Activated CD4-positive, alpha-beta T cell treated with anti-CD3 and anti-CD28 coated beads for 36 hours (primary cell): ENCODE measurements at regions of chrX and their contacts with region 1.

Region 1: GRCh38 chrX:107776649-107777535 is 641 bp upstream of the NCBP2L start:
- DNase-seq: peak; percentile 88
- ATAC-seq: peak; percentile 80
- H3K4me3 Mint-ChIP-seq: peak overlapping the region; percentile 77
- H3K27ac Mint-ChIP-seq: peak overlapping the region; percentile 86
- H3K4me1 Mint-ChIP-seq: peaks cover 12% of the 10 kb centered on the region
- H3K27me3 Mint-ChIP-seq: no peaks in the 10 kb centered on the region

Region 2: GRCh38 chrX:106999002-106999975 is 777.6 kb before region 1 on chrX:
- CTCF ChIA-PET with region 1: no interaction called
- POLR2A ChIA-PET with region 1: no interaction called
- intact Hi-C with region 1: loop called in 1 of 2 experiments (anchors 1 kb)
- DNase-seq: peak; percentile 66
- ATAC-seq: peak; percentile 65
- H3K4me3 Mint-ChIP-seq: peak overlapping the region; percentile 80
- H3K27ac Mint-ChIP-seq: peak overlapping the region; percentile 78
- H3K4me1 Mint-ChIP-seq: peaks cover 3% of the 10 kb centered on the region
- H3K27me3 Mint-ChIP-seq: no peaks in the 10 kb centered on the region

Region 3: DNA sequence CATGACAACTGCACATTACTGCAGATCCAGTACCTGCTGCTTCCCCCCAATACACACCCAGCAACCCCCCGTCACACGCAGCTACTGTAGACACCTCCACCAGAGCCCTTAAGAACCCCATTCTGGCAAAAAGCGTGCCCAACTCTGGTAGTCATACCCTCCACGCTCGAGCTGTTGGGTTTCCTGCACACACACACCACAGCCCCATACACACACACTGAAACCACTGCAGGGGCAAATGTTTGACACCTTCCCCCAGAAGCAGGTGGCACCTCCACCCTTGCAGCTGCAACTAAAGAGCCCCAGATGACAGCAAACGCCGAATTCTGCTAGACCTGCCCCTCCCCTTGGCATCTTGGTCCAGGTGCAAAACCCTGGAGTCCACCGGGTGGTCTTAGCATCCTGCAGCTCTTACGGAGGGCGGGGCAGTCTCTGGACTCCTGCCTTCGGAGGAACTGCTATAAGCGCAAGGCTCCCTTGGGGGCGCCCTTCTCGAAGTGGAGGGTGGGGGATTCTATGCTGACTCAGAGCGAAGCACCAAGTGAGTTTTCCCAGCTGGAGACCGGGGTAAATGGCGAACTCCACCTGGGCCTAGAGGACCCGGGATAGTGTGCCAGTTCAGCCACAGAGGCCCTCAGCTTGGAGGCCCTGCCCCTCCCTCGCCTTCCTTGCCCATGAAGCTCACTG is 325.9 kb before region 1 on chrX:
- CTCF ChIA-PET with region 1: interaction called, 3 read pairs
- POLR2A ChIA-PET with region 1: no interaction called
- intact Hi-C with region 1: loop called in 1 of 2 experiments (anchors 10 kb)
- DNase-seq: peak; percentile 45
- ATAC-seq: no peak
- H3K4me3 Mint-ChIP-seq: peak overlapping the region; percentile 43
- H3K27ac Mint-ChIP-seq: no peak overlapping the region
- H3K4me1 Mint-ChIP-seq: peaks cover 16% of the 10 kb centered on the region
- H3K27me3 Mint-ChIP-seq: peaks cover 43% of the 10 kb centered on the region

Region 4: GRCh38 chrX:107602694-107603239 is 174.1 kb before region 1 on chrX:
- CTCF ChIA-PET with region 1: no interaction called
- POLR2A ChIA-PET with region 1: no interaction called
- intact Hi-C with region 1: no loop called
- DNase-seq: no peak
- ATAC-seq: no peak
- H3K4me3 Mint-ChIP-seq: no peak overlapping the region
- H3K27ac Mint-ChIP-seq: no peak overlapping the region
- H3K4me1 Mint-ChIP-seq: no peaks in the 10 kb centered on the region
- H3K27me3 Mint-ChIP-seq: no peaks in the 10 kb centered on the region

Region 5: DNA sequence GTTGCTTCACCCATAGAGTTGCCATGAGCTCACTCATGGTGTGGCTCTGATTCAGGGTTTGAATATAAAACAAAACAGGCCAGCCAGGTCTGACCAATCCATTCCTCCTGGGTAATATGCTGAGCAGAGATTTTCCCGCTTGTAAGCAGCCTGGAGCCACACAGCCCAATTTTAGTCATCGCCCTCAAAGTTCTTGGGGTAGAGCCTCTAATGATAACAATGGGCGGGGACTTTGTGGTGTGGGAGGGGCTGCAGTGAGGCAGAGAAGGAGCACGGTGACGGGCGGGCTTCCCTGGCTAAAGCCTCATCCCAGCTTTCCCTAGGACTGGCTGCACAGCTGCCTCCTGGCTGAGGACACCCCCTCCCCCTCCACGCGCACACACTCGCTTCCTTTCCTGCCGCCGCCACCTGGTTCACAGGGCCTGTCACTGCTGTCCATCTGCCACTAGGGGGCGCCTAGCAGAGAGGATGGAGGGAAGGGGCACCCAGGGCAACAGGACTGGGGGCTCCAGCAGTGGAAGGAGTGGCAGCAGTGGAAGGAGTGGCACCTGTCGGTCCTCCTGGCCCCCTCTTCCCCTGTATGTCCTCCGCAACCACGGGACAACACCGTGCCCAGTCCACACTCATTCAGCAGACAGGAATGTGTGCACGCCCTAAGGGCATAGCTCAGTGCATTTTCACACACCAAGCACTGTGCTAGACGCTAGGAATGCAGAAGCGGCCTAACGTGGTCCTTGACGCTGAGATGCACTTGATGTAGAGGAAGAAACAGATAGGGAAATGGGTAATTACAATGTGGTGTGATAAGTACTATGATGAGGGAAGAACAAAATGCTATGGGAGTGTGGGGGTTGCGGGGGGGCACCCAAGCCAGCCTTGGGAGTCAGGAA is 121.8 kb before region 1 on chrX:
- CTCF ChIA-PET with region 1: interaction called, 149 read pairs
- POLR2A ChIA-PET with region 1: interaction called, 4 read pairs
- intact Hi-C with region 1: loop called (anchors 1 kb)
- DNase-seq: peak; percentile 81
- ATAC-seq: peak; percentile 83
- H3K4me3 Mint-ChIP-seq: no peak overlapping the region
- H3K27ac Mint-ChIP-seq: peak overlapping the region; percentile 2
- H3K4me1 Mint-ChIP-seq: peaks cover 12% of the 10 kb centered on the region
- H3K27me3 Mint-ChIP-seq: no peaks in the 10 kb centered on the region

Region 6: GRCh38 chrX:107716816-107717700 is 59.8 kb before region 1 on chrX:
- CTCF ChIA-PET with region 1: interaction called, 20 read pairs
- POLR2A ChIA-PET with region 1: interaction called, 5 read pairs
- intact Hi-C with region 1: loop called (anchors 1 to 2 kb)
- DNase-seq: peak; percentile 88
- ATAC-seq: peak; percentile 88
- H3K4me3 Mint-ChIP-seq: peak overlapping the region; percentile 90
- H3K27ac Mint-ChIP-seq: peak overlapping the region; percentile 92
- H3K4me1 Mint-ChIP-seq: peaks cover 43% of the 10 kb centered on the region
- H3K27me3 Mint-ChIP-seq: no peaks in the 10 kb centered on the region

Region 7: DNA sequence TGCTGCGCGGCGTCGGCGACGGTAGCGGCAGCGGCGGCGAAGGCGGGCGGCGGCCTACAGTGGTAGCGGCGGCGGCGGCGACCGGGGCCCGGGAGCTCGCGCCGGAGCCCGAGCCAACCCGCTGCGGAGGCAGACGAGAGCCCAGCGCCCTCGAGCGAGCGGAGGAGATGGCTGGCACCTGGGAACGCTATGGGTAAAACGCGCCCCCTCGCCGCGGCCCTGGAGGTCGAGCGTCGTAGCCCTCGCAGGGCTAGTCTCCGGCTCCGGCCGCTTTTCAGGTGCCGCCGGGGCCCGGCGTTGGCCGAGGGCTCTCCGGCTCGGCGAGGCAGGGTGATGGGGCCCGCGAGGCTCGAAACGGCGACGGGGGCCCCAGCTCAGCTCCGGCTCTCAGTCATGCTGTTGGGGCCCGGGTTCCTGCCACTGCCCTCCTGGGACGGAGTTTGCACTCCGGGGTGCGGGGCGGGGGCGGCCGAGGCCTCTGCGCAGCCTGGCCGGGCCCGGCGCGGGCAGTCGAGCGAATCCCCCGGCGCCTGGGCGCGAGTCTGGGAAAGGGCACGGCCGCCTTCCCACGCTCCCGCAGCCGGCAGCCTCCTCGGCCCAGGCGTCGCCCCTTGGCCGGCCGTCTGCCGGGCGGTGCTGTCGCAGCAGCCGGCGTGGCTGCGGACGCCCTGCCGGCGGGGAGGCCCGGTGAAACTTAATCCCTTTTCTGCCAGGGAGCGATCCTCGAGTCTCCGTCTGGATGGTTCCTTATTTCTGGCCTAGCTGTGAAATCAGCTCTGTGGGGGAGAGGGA is 49.5 kb after region 1 on chrX:
- CTCF ChIA-PET with region 1: interaction called, 7 read pairs
- POLR2A ChIA-PET with region 1: no interaction called
- intact Hi-C with region 1: loop called in 1 of 2 experiments (anchors 2 kb)
- DNase-seq: peak; percentile 56
- ATAC-seq: peak; percentile 43
- H3K4me3 Mint-ChIP-seq: peak overlapping the region; percentile 75
- H3K27ac Mint-ChIP-seq: peak overlapping the region; percentile 78
- H3K4me1 Mint-ChIP-seq: peaks cover 46% of the 10 kb centered on the region
- H3K27me3 Mint-ChIP-seq: peaks cover 4% of the 10 kb centered on the region

Region 8: GRCh38 chrX:108070891-108071290 is 294.0 kb after region 1 on chrX:
- CTCF ChIA-PET with region 1: interaction called, 3 read pairs
- POLR2A ChIA-PET with region 1: no interaction called
- intact Hi-C with region 1: loop called in 1 of 2 experiments (anchors 5 kb)
- DNase-seq: no peak
- ATAC-seq: no peak
- H3K4me3 Mint-ChIP-seq: no peak overlapping the region
- H3K27ac Mint-ChIP-seq: no peak overlapping the region
- H3K4me1 Mint-ChIP-seq: peaks cover 4% of the 10 kb centered on the region
- H3K27me3 Mint-ChIP-seq: no peaks in the 10 kb centered on the region

Region 9: DNA sequence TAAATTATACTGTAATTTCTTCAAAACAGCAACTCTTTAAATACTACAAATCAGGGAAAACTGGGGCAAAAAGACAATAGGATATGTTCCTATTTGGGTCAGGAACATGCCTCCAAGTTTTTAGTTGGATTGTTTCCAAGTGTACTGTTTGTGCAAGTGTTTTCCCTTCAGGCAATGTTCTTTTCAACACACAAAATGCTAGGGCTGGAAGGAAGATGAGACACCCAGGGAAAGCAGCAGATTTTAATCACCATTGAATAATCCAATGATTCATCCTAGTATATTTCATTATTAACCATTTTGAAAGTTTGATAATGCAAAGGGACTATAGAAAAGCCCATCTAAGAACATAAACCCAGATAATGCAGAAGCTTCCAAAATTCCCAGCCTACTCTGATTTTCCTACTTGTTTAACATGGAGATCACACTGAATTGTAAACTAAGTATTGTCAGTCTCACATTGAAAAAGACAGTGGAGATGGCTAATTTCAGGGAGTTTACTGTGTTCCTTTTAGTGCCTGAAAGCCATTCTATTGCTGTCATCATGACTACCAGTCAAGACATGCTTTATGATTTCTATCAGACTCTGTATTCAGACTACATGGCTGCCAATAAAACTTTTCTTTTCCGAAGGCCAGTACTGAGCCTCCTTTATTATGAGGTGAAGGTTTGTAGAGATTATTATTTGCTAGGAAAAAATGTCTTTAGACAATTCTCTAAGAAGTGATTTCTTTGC is 622.7 kb after region 1 on chrX:
- CTCF ChIA-PET with region 1: no interaction called
- POLR2A ChIA-PET with region 1: no interaction called
- intact Hi-C with region 1: no loop called
- DNase-seq: no peak
- ATAC-seq: no peak
- H3K4me3 Mint-ChIP-seq: no peak overlapping the region
- H3K27ac Mint-ChIP-seq: no peak overlapping the region
- H3K4me1 Mint-ChIP-seq: no peaks in the 10 kb centered on the region
- H3K27me3 Mint-ChIP-seq: no peaks in the 10 kb centered on the region